Dendritic cell treated with granulocyte-macrophage colony-stimulating factor and Interleukin-4, amounts not matched to agents 40 ng/mL and 50 ng/mL, for 4 days (primary cell): ENCODE measurements at regions of chr1 and their contacts with region 1.

Region 1: GRCh38 chr1:17059739-17060460 is 6.1 kb upstream of the SDHB start:
- H3K4me3 Mint-ChIP-seq: no peak overlapping the region
- H3K27ac Mint-ChIP-seq: no peak overlapping the region
- H3K4me1 Mint-ChIP-seq: peaks cover 29% of the 10 kb centered on the region
- H3K27me3 Mint-ChIP-seq: no peaks in the 10 kb centered on the region

Region 2: DNA sequence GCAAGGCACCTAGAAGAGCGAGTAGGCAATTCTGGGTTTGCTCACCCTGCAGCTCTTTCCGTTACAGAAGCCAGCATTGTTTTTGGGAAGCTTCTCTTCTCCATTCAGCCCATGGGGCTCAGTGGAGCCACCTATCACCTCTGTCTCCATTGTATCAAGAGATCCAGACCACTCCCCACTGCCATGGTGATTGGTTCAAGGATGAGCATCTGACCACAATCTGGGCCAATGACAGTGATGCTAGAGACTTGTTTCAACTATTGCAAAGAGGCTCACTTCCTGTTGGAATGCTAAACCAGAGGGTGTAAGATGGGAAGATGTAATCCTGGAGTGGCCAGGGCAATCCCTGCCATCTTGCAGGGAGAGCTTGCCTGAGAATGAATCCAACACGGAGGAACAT is 629.3 kb before region 1 on chr1:
- intact Hi-C with region 1: no loop called
- H3K4me3 Mint-ChIP-seq: no peak overlapping the region
- H3K27ac Mint-ChIP-seq: no peak overlapping the region
- H3K4me1 Mint-ChIP-seq: peaks cover 24% of the 10 kb centered on the region
- H3K27me3 Mint-ChIP-seq: peaks cover 4% of the 10 kb centered on the region

Region 3: GRCh38 chr1:17075470-17076255 is 15.8 kb after region 1 on chr1:
- intact Hi-C with region 1: loop called (anchors 2 kb)
- H3K4me3 Mint-ChIP-seq: no peak overlapping the region
- H3K27ac Mint-ChIP-seq: no peak overlapping the region
- H3K4me1 Mint-ChIP-seq: peaks cover 13% of the 10 kb centered on the region
- H3K27me3 Mint-ChIP-seq: no peaks in the 10 kb centered on the region

Region 4: DNA sequence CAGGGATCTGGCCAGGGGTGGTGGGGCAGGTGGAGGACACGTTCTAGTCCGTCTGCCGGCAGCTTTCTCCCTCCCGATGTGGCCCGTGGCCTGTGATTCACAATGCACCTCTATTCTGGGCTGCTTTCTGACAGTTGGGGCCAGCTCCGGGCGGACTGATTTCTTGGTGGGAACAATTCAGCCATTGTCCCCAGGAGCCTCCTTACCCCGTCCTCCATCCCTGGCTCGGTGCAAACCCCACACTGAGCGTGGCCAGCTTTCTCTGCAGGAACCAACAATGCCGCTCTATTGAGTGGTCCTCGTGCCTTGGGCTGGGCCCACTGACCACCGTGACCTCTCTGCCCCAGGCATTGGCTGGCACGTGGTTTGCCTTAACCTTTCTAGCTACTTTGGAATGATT is 29.6 kb after region 1 on chr1:
- intact Hi-C with region 1: no loop called
- H3K4me3 Mint-ChIP-seq: no peak overlapping the region
- H3K27ac Mint-ChIP-seq: no peak overlapping the region
- H3K4me1 Mint-ChIP-seq: no peaks in the 10 kb centered on the region
- H3K27me3 Mint-ChIP-seq: no peaks in the 10 kb centered on the region

Region 5: DNA sequence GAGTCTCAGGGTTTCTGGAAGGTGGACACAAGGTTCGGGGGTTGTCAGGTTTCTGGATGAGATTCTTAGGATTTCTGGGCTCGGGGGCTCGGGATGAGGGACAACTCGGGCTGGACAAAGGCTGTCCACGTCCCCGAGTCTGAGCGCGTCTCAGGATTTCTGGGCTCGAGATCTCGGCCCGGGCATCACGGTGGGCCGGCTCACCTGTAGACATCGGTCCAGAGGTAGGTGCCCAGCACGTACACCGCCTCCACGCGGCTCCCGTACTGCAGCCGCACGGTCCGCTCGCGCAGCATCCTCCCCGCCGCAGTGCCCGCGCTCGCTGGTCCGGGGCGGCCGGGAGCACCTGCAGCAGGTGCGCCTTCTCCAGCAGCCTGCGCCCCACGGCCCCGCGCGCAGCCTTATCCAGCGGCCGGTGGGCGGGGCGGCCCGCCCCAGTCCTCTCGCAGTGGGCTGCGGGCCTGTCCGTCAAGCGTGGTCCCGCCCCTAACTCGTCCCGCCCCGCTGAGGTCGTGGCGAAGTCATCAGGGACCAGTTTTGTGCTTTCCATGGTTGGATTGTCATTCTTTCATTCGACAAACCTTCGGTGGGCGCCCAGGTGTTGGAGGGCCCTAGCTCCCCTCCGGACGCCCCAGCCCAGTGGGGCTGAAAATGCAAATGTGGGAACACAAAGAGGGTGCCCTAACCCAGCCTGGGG is 59.3 kb after region 1 on chr1 and contains the start of gene PADI2:
- intact Hi-C with region 1: loop called (anchors 5 kb)
- H3K4me3 Mint-ChIP-seq: peak within 1 kb of the TSS; percentile 78
- H3K27ac Mint-ChIP-seq: peak within 1 kb of the TSS; percentile 70
- H3K4me1 Mint-ChIP-seq: peaks cover 47% of the 10 kb centered on the region
- H3K27me3 Mint-ChIP-seq: peaks cover 13% of the 10 kb centered on the region

Region 6: DNA sequence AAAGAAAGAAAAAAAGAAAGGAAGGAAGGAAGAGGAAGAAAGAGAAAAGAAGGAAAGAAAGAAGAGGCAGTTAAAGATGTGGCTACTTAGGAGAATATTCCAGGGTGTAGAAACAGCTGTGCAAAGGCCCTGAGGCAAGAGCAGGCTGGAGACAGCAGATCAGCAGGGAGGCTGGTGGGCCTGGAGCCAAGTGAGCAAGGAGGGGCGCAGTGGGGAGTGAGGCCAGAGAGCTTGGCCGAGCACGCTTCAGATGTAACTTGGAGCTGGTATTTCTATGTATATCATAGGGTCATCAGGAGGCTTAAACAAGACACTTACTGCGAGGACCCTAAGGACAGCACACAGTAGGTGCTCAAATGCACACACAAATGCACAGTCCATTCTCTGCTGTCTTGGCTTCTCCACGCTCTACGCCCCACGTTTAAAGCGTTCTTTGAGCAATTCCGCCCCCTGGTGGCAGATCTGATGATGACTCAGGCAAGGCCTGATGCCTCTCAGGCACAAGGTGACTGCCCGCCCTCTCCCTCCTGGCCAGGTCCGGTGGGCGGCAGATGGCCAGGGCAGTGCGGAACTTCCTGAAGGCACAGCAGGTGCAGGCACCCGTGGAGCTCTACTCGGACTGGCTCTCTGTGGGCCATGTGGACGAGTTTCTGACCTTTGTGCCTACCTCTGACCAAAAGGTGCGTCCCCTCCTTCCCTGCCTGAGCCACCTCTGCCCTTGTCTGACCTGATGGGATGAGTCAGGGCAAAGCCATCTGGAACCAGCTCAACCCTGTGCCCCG is 177.1 kb after region 1 on chr1:
- intact Hi-C with region 1: loop called (anchors 1 kb)
- H3K4me3 Mint-ChIP-seq: no peak overlapping the region
- H3K27ac Mint-ChIP-seq: no peak overlapping the region
- H3K4me1 Mint-ChIP-seq: peaks cover 27% of the 10 kb centered on the region
- H3K27me3 Mint-ChIP-seq: peaks cover 7% of the 10 kb centered on the region

Region 7: GRCh38 chr1:17335821-17336710 is 276.2 kb after region 1 on chr1:
- intact Hi-C with region 1: loop called (anchors 1 kb)
- H3K4me3 Mint-ChIP-seq: no peak overlapping the region
- H3K27ac Mint-ChIP-seq: no peak overlapping the region
- H3K4me1 Mint-ChIP-seq: no peaks in the 10 kb centered on the region
- H3K27me3 Mint-ChIP-seq: no peaks in the 10 kb centered on the region

Region 8: GRCh38 chr1:17405898-17406759 is 346.2 kb after region 1 on chr1:
- intact Hi-C with region 1: loop called (anchors 5 kb)
- H3K4me3 Mint-ChIP-seq: no peak overlapping the region
- H3K27ac Mint-ChIP-seq: no peak overlapping the region
- H3K4me1 Mint-ChIP-seq: peaks cover 5% of the 10 kb centered on the region
- H3K27me3 Mint-ChIP-seq: peaks cover 2% of the 10 kb centered on the region